Caco-2 (cell line): ENCODE measurements at regions of chr15 and their contacts with region 1.

Region 1: GRCh38 chr15:69576035-69576526 is 123.5 kb downstream of the RPLP1 start:
- DNase-seq: no peak
- H3K4me3 ChIP-seq: no peak overlapping the region
- H3K4me3 Mint-ChIP-seq: no peak overlapping the region
- H3K27ac Mint-ChIP-seq: no peak overlapping the region
- H3K4me1 ChIP-seq: no peaks in the 10 kb centered on the region; the same call in 1 of the 2 replicates
- H3K4me1 Mint-ChIP-seq: no peaks in the 10 kb centered on the region
- H3K27me3 ChIP-seq: no peaks in the 10 kb centered on the region
- H3K27me3 Mint-ChIP-seq: no peaks in the 10 kb centered on the region
- CTCF ChIP-seq: peak in 1 of 2 experiments; percentile 24

Region 2: GRCh38 chr15:69559440-69560190 is 16.5 kb before region 1 on chr15:
- CTCF ChIA-PET with region 1: interaction called, 3 read pairs
- POLR2A ChIA-PET with region 1: interaction called, 7 read pairs
- intact Hi-C with region 1: loop called (anchors 2 kb)
- DNase-seq: no peak
- H3K4me3 ChIP-seq: no peak overlapping the region
- H3K4me3 Mint-ChIP-seq: no peak overlapping the region
- H3K27ac Mint-ChIP-seq: no peak overlapping the region
- H3K4me1 ChIP-seq: peaks cover 62% of the 10 kb centered on the region
- H3K4me1 Mint-ChIP-seq: peaks cover 49% of the 10 kb centered on the region
- H3K27me3 ChIP-seq: no peaks in the 10 kb centered on the region
- H3K27me3 Mint-ChIP-seq: no peaks in the 10 kb centered on the region
- CTCF ChIP-seq: no peak

Region 3: DNA sequence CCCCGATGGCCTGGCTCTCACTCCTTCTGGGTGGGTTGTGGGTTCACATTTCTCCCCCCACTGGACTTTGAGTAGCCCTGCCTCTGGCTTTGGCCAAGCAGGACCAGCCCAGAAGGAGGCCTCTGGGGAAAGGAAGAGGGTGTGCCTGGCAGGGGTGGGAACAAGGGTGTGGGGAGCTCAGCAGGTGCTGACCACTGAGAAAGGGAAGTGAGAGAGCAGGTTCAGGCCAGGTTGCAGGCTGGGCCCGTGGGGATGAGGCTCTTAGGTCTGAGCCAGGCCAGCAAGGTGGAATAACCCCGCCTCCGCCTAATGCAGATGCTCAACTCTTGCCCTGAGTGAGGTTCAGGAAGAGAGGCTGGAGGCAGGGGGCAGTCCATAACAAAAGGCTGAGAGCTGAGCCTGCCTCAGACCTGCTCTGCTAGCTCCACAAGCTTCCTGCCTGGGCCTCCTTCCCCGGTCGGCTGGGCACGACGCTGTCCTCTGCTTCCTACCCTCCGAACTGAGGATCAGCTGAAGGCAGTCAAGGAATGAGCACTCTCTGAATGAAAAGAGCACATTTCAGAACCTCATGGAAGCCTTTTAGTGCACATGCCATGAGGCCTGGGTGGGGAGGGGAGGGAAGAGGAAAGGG is 438.9 kb after region 1 on chr15:
- CTCF ChIA-PET with region 1: no interaction called
- POLR2A ChIA-PET with region 1: no interaction called
- intact Hi-C with region 1: loop called (anchors 5 kb)
- DNase-seq: peak in 1 of 2 experiments; percentile 10
- H3K4me3 ChIP-seq: no peak overlapping the region
- H3K4me3 Mint-ChIP-seq: no peak overlapping the region
- H3K27ac Mint-ChIP-seq: no peak overlapping the region
- H3K4me1 ChIP-seq: no peaks in the 10 kb centered on the region
- H3K4me1 Mint-ChIP-seq: peaks cover 7% of the 10 kb centered on the region
- H3K27me3 ChIP-seq: no peaks in the 10 kb centered on the region
- H3K27me3 Mint-ChIP-seq: no peaks in the 10 kb centered on the region
- CTCF ChIP-seq: no peak

Region 4: DNA sequence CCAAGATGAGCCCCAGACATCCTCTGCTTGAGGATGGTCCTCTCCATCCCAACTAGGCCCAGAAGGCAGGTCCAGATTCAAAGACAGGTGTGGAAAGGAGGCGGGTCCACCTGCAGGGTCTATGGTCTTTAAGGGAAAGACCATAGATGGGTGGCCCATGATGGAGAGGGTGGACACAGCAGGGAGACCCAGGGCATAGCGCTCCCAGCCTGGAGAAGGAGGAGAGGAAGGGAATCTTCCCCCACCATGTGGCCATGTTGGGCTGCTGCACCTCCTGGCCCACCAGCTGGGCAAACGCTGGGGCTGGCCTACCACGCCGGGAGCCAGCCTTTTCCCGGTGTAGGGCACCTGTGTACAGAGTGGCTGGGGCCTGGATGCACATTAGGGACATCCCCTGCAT is 786.8 kb after region 1 on chr15:
- CTCF ChIA-PET with region 1: no interaction called
- POLR2A ChIA-PET with region 1: no interaction called
- intact Hi-C with region 1: no loop called
- DNase-seq: peak; percentile 54 to 63
- H3K4me3 ChIP-seq: no peak overlapping the region
- H3K4me3 Mint-ChIP-seq: no peak overlapping the region
- H3K27ac Mint-ChIP-seq: no peak overlapping the region
- H3K4me1 ChIP-seq: no peaks in the 10 kb centered on the region; the same call in 1 of the 2 replicates
- H3K4me1 Mint-ChIP-seq: peaks cover 5% of the 10 kb centered on the region
- H3K27me3 ChIP-seq: no peaks in the 10 kb centered on the region
- H3K27me3 Mint-ChIP-seq: no peaks in the 10 kb centered on the region
- CTCF ChIP-seq: peak; percentile 71 to 75

Region 5: GRCh38 chr15:70569091-70569621 is 993.1 kb after region 1 on chr15:
- CTCF ChIA-PET with region 1: interaction called, 12 read pairs
- POLR2A ChIA-PET with region 1: no interaction called
- intact Hi-C with region 1: no loop called
- DNase-seq: peak; percentile 55 to 63
- H3K4me3 ChIP-seq: no peak overlapping the region
- H3K4me3 Mint-ChIP-seq: no peak overlapping the region
- H3K27ac Mint-ChIP-seq: peak overlapping the region; percentile 82
- H3K4me1 ChIP-seq: peaks cover 13% of the 10 kb centered on the region
- H3K4me1 Mint-ChIP-seq: peaks cover 13% of the 10 kb centered on the region
- H3K27me3 ChIP-seq: no peaks in the 10 kb centered on the region
- H3K27me3 Mint-ChIP-seq: no peaks in the 10 kb centered on the region
- CTCF ChIP-seq: peak; percentile 37 to 75